Sigmoid colon (tissue), 7 donors: ENCODE measurements at regions of chrX and their contacts with region 1.

Region 1: GRCh38 chrX:154051201-154051810 is 31.6 kb upstream of the IRAK1 start:
- DNase-seq: peak; percentile 83
- H3K4me3 ChIP-seq: no peak overlapping the region
- H3K27ac ChIP-seq: peak overlapping the region in 3 of 4 donors; percentile 49 to 81 (median 74)
- H3K4me1 ChIP-seq: peaks cover 0 to 57% (median 43%) of the 10 kb centered on the region in 4 donors
- H3K27me3 ChIP-seq: no peaks in the 10 kb centered on the region
- CTCF ChIP-seq: peak; percentile 32 to 48 (median 40)
- EP300 ChIP-seq: no peak
- POLR2A ChIP-seq: no peak

Region 2: DNA sequence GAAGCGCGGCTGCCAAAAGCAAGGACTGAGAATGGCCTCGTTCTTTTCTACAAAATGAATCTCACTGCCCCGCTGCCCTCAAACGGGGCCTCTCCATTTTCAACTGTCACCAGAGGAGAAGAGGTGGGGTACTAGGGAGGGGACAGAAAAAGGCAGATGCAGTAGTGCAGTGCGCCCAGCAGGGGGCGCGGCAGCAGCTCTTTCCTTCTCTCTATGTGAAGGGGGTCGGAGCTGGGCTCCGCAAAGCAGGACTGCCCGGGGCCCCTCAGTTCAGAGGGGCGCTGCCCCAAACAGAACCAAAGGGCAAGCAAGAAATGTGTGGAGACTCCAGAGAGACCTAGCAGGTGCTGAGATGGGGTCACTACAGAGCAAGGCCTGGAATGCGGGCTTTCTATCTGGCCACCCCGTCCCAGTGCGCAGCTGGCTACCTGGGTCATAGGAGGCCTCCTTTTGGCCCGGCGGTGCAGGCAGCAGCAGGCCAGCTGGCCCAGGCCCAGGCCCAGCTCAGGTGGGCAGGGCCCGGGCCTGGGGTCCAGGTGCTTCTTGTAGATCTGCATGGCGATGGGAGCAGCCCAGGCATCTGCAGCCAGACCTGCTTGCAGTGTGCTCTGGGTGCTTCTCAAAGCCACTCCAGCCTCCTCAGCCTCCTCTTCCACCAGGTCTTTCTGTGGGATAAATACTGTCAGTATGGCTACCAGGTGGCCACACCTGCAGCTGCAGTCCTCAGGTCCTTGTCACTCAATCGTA is 37.5 kb before region 1 on chrX:
- intact Hi-C with region 1: loop called (anchors 2 kb)
- DNase-seq: no peak
- H3K4me3 ChIP-seq: no peak overlapping the region
- H3K27ac ChIP-seq: peak overlapping the region in 1 of 4 donors; percentile 0
- H3K4me1 ChIP-seq: peaks cover 0 to 15% (median 8%) of the 10 kb centered on the region in 4 donors
- H3K27me3 ChIP-seq: peaks cover 0 to 2% (median 0%) of the 10 kb centered on the region in 3 donors
- CTCF ChIP-seq: peak; percentile 60 to 86 (median 76)
- EP300 ChIP-seq: no peak
- POLR2A ChIP-seq: no peak

Region 3: DNA sequence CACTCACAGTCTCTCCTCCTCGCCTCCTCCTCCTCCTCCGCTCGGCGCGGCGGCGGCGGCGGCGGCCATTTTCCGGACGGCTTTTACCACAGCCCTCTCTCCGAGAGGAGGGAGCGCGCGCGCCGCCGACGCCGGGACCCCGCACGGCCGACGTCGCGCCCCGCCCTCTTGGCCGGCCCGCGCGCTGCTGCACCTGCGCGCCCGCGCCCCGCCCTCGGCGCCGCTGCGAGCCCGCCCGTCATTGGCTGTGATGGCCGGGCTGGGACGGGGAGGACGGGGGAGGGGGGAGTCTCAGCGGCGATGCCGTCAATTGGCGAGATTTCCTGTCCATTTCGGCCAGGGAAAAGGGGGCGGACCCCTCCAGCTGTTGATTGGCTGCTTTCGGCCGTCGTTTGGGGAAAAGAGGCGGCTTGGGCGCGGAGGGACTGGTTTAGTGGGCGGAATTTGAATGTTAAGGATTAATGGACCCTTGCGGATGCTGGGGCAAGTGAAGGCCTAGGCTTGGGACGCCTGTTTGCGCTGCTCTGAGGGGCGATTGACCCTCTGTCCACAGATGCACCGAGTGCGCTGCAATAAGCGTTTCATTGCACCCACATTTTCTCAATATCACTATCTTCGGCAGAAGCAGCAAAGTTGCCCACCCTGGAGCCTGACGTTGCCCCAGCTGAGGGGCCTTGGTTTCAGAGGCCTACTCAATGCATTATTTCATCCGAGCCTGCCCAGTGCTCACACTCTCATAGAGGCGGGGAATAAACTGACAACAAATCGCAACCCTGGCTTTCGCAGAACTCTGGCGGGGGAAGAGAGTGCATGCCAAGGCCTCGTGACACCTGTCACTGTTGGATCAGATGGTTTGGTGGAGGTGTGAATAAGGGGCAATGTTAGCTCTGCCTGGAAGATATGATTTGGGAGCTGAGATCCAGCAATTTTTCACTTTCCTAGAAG is 46.6 kb after region 1 on chrX and contains the start of gene MECP2:
- intact Hi-C with region 1: loop called (anchors 5 kb)
- DNase-seq: peak; percentile 96
- H3K4me3 ChIP-seq: peak within 1 kb of the TSS; percentile 64 to 81 (median 74)
- H3K27ac ChIP-seq: peak within 1 kb of the TSS; percentile 95 to 100 (median 98)
- H3K4me1 ChIP-seq: peaks cover 0 to 39% (median 21%) of the 10 kb centered on the region in 4 donors
- H3K27me3 ChIP-seq: no peaks in the 10 kb centered on the region
- CTCF ChIP-seq: no peak
- EP300 ChIP-seq: no peak
- POLR2A ChIP-seq: no peak
- total RNA-seq, gene MECP2: 43.9 to 57.9 (median 49.6) TPM